Breast epithelium (tissue), 4 donors: ENCODE measurements at regions of chr18 and their contacts with region 1.

Region 1: GRCh38 chr18:72601481-72601880 is 57.3 kb upstream of the CBLN2 start:
- DNase-seq: no peak
- H3K4me3 ChIP-seq: no peak overlapping the region
- H3K27ac ChIP-seq: no peak overlapping the region
- H3K4me1 ChIP-seq: no peaks in the 10 kb centered on the region
- H3K27me3 ChIP-seq: no peaks in the 10 kb centered on the region
- CTCF ChIP-seq: no peak
- POLR2A ChIP-seq: no peak

Region 2: GRCh38 chr18:72581976-72582375 is 19.5 kb before region 1 on chr18:
- intact Hi-C with region 1: loop called (anchors 1 kb)
- DNase-seq: no peak
- H3K4me3 ChIP-seq: no peak overlapping the region
- H3K27ac ChIP-seq: no peak overlapping the region
- H3K4me1 ChIP-seq: no peaks in the 10 kb centered on the region
- H3K27me3 ChIP-seq: no peaks in the 10 kb centered on the region
- CTCF ChIP-seq: no peak
- POLR2A ChIP-seq: no peak

Region 3: GRCh38 chr18:72672364-72673184 is 71.1 kb after region 1 on chr18:
- intact Hi-C with region 1: no loop called
- DNase-seq: no peak
- H3K4me3 ChIP-seq: no peak overlapping the region
- H3K27ac ChIP-seq: no peak overlapping the region
- H3K4me1 ChIP-seq: no peaks in the 10 kb centered on the region
- H3K27me3 ChIP-seq: no peaks in the 10 kb centered on the region
- CTCF ChIP-seq: peak in 2 of 3 donors; percentile 31 to 41
- POLR2A ChIP-seq: no peak

Region 4: DNA sequence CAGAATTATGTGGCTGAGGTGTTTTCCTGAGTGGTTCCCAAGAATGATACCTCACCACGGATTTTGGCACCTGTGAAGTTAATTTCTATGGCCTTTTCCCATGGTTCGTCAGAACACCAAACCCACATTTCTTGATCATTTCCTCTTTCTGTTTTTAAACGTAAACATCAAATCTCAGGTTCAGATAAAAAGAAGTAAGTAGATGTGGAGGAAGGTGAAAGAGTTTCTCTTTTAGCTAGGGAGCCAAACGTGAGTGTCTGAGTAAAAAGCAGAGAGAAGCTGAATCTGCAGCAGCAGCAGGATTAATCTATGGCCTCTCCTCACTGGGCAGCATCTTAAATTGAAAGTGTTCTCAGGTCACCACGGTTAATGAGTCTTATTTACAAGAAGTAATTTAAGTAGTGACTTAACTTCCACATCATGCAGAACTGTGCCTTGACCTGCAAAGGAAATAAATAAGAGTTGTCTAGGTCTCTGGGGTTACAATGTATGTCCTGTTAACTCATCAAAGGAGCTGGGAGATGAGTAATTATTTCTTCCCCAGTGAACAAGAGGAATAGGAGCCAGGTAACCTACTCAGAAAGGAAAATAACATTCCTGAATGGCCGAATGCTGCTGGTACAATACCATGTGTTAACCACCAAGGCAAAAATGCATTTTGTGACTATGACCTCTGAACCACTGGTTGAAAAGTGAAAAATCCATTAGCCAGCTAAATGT is 405.9 kb after region 1 on chr18:
- intact Hi-C with region 1: no loop called
- DNase-seq: no peak
- H3K4me3 ChIP-seq: no peak overlapping the region
- H3K27ac ChIP-seq: no peak overlapping the region
- H3K4me1 ChIP-seq: no peaks in the 10 kb centered on the region
- H3K27me3 ChIP-seq: no peaks in the 10 kb centered on the region
- CTCF ChIP-seq: no peak
- POLR2A ChIP-seq: no peak